ENCODE measurements at regions of chr11 and their contacts with region 1.

Region 1: GRCh38 chr11:61961570-61962212 is 5.7 kb downstream of the FTH1 start:
- DNase-seq: peak in 1 of 14 experiments; percentile 22
- ATAC-seq: no peak
- H3K4me3 ChIP-seq: no peak overlapping the region
- H3K4me3 Mint-ChIP-seq: no peak overlapping the region
- H3K27ac ChIP-seq: no peak overlapping the region
- H3K27ac Mint-ChIP-seq: peak overlapping the region; percentile 84
- H3K4me1 ChIP-seq: peaks cover 35% of the 10 kb centered on the region
- H3K4me1 Mint-ChIP-seq: peaks cover 45% of the 10 kb centered on the region
- H3K27me3 ChIP-seq: no peaks in the 10 kb centered on the region
- H3K27me3 Mint-ChIP-seq: peaks cover 5% of the 10 kb centered on the region
- CTCF ChIP-seq: no peak

Region 2: DNA sequence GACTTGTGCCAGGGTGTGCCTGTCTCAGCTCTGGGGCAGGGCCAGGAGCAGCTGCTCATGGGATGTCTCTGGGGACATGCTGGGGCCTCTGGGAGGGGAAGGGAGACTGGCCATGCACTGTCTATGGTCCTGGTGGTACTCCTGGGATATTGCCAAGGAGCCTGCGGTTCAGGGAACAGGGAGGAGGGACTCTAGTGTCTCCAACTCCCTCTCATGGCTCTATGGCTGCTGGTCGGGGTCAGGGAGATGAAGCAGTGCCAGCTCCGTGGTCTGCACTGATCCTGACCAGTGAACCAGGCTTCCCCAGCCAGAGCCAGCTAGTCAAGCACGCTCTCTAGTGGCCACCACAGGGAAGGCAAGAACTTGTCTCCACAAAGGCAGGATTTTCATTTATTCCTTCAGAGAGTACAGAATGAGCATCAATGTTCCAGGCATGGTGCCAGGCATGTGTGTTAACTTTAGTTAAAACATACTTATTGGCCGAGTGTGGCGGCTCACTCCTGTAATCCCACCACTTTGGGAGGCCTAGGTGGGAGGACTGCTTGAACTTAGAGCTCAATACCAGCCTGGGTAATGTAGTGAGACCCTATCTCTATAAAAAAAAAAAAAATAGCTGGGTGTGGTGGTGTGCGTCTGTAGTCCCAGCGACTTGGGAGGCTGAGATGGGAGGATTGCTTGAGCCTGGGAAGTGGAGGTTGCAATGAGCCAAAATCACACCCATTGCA is 14.0 kb before region 1 on chr11:
- CTCF ChIA-PET with region 1: interaction called, 12 read pairs
- POLR2A ChIA-PET with region 1: interaction called, 20 read pairs
- intact Hi-C with region 1: no loop called
- DNase-seq: peak; percentile 42 to 81 (median 58)
- ATAC-seq: peak; percentile 87
- H3K4me3 ChIP-seq: no peak overlapping the region
- H3K4me3 Mint-ChIP-seq: no peak overlapping the region
- H3K27ac ChIP-seq: no peak overlapping the region
- H3K27ac Mint-ChIP-seq: no peak overlapping the region
- H3K4me1 ChIP-seq: peaks cover 8% of the 10 kb centered on the region
- H3K4me1 Mint-ChIP-seq: no peaks in the 10 kb centered on the region
- H3K27me3 ChIP-seq: peaks cover 0 to 3% of the 10 kb centered on the region in 2 experiments
- H3K27me3 Mint-ChIP-seq: peaks cover 16% of the 10 kb centered on the region
- CTCF ChIP-seq: peak; percentile 70